GM12878 (cell line): ENCODE measurements at regions of chr16 and their contacts with region 1.

Region 1: DNA sequence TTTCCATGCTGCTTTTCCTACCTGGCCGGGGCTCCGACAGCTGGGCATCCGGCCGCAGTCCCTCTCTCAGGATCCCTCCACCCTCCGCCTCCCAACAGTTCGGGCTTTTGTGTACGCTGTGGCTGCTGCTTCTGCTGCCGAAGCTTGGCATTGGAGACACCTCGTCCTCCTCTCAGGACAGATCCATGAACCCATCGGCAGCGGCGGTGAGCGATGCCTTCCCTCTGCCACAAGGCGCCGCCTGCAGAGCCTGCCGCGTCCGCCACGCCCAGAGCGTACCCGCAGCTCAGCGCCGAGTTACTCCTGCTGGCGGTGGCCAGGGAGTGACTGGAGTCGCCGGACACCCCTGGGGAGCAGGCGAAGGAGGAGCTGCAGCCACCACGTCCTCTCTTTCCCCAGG is 2032.8 kb downstream of the TP53TG3F start:
- DNase-seq: no peak
- ATAC-seq: no peak
- H3K4me3 ChIP-seq: no peak overlapping the region
- H3K27ac ChIP-seq: no peak overlapping the region
- H3K4me1 ChIP-seq: no peaks in the 10 kb centered on the region
- H3K27me3 ChIP-seq: no peaks in the 10 kb centered on the region
- CTCF ChIP-seq: no peak
- EP300 ChIP-seq: no peak
- POLR2A ChIP-seq: no peak
- RAD21 ChIP-seq: no peak

Region 2: GRCh38 chr16:35344012-35344762 is 148.0 kb before region 1 on chr16:
- CTCF ChIA-PET with region 1: no interaction called
- POLR2A ChIA-PET with region 1: no interaction called
- RAD21 ChIA-PET with region 1: no interaction called
- SMC1A ChIA-PET with region 1: no interaction called
- in situ Hi-C with region 1: no loop called
- intact Hi-C with region 1: loop called (anchors 10 kb)
- DNase-seq: no peak
- ATAC-seq: no peak
- H3K4me3 ChIP-seq: no peak overlapping the region
- H3K27ac ChIP-seq: no peak overlapping the region
- H3K4me1 ChIP-seq: no peaks in the 10 kb centered on the region
- H3K27me3 ChIP-seq: no peaks in the 10 kb centered on the region
- CTCF ChIP-seq: no peak
- EP300 ChIP-seq: no peak
- POLR2A ChIP-seq: no peak
- RAD21 ChIP-seq: no peak